ENCODE measurements at regions of chr11 and their contacts with region 1.

Region 1: DNA sequence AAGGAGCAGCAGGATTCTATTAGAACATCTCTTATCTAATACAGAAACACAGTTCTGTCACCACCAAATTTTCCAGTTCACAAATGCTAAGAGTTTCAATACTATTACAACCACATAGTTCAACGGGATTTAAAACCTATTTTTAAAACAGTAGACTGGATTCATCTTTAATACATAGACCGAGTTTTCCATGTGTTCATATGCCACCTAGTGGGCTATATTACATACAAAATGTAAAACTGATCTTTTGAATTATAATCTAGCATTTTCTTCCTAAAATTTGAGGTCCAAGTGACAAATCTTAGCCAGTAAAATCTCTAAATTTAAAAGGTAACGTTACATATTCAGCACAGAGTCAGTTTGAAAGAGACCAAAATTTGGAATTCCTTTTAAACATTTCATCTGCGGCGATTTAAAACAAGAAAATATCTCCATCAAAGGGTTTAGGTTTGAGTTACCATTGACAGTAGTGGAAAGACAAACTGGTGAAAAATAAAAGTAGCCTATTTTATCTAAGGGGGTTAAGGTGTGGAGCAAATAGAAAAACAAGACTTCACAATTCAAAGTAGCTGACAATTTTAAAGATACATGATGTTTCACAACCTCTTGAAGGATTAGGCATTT is 269.3 kb upstream of the MPPED2 start:
- DNase-seq: no peak
- ATAC-seq: no peak
- H3K4me3 Mint-ChIP-seq: no peak overlapping the region
- H3K27ac Mint-ChIP-seq: no peak overlapping the region
- H3K4me1 Mint-ChIP-seq: no peaks in the 10 kb centered on the region
- H3K27me3 Mint-ChIP-seq: no peaks in the 10 kb centered on the region
- CTCF ChIP-seq: no peak

Region 2: DNA sequence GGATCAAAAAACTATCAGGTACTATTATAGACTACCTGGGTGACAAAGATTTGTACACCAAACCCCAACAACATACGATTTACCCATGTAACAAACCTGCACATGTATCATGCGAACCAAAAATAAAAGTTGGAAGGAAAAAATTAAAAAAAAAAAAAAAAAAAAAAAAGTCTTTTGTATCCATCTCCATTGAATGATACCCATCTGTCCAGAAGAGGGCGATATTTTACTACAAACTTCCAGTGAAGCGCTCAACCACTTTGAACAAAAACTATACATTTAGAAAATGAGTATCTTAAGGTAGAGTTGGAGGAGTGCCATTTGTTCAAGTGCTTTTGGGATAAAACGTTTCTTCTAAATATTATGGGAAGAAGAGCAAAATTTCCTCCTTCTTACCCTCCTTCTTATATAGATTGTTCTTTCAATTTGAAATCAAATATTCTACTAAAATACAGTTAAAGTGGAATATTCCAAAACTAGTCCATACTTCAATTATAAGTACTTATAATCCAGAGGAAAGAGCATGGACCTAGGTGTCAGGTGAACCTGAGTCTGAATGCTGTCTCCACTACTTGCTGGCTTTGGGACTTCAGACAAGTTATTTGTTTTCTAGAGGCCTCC is 509.3 kb before region 1 on chr11:
- CTCF ChIA-PET with region 1: no interaction called
- POLR2A ChIA-PET with region 1: no interaction called
- intact Hi-C with region 1: loop called (anchors 2 kb)
- DNase-seq: no peak
- ATAC-seq: no peak
- H3K4me3 Mint-ChIP-seq: no peak overlapping the region
- H3K27ac Mint-ChIP-seq: no peak overlapping the region
- H3K4me1 Mint-ChIP-seq: peaks cover 38% of the 10 kb centered on the region
- H3K27me3 Mint-ChIP-seq: no peaks in the 10 kb centered on the region
- CTCF ChIP-seq: peak; percentile 50

Region 3: GRCh38 chr11:31477528-31478222 is 622.2 kb after region 1 on chr11:
- CTCF ChIA-PET with region 1: no interaction called
- POLR2A ChIA-PET with region 1: no interaction called
- intact Hi-C with region 1: loop called (anchors 5 kb)
- DNase-seq: no peak
- ATAC-seq: no peak
- H3K4me3 Mint-ChIP-seq: no peak overlapping the region
- H3K27ac Mint-ChIP-seq: no peak overlapping the region
- H3K4me1 Mint-ChIP-seq: no peaks in the 10 kb centered on the region
- H3K27me3 Mint-ChIP-seq: no peaks in the 10 kb centered on the region
- CTCF ChIP-seq: no peak